ENCODE measurements at regions of chr10 and their contacts with region 1.

Region 1: GRCh38 chr10:101959349-101959916 is 96.5 kb downstream of the ARMH3 start:
- DNase-seq: no peak
- H3K4me3 ChIP-seq: no peak overlapping the region
- H3K27ac ChIP-seq: no peak overlapping the region
- H3K4me1 ChIP-seq: no peaks in the 10 kb centered on the region
- H3K27me3 ChIP-seq: no peaks in the 10 kb centered on the region
- CTCF ChIP-seq: no peak

Region 2: DNA sequence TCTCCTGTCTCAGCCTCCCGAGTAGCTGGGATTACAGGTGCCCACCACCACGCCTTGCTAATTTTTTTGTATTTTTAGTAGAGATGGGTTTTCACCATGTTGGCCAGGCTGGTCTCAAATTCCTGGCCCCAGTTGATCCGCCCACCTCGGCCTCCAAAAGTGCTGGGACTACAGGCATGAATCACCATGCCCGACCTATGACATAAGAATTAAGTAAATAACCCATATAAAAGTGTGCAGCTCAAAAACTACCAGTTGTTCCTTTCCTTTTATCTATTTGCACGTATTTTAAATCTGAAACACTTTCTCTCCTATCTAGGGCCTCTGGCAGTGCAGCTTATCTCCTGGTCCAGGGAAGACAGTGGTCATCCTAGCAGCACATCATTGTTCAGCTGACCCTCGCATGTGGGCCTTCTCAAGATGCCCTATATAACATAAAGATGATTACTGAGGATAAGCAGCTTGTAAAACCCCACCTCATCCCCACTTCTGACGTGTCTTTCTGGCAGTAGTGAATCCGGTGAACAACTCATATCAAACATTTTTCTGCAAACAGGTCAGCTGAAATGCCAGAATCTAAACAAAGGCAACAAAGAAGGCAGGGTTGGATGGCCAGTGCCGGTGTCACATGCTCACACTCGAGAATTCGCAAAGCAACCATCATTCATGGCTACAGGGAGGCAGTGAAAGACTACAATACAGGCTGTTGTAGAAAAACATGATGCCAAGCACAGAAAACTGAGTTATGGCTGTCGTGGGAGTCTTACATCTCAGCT is 79.8 kb before region 1 on chr10:
- intact Hi-C with region 1: no loop called
- DNase-seq: no peak
- H3K4me3 ChIP-seq: no peak overlapping the region
- H3K27ac ChIP-seq: no peak overlapping the region
- H3K4me1 ChIP-seq: no peaks in the 10 kb centered on the region
- H3K27me3 ChIP-seq: no peaks in the 10 kb centered on the region
- CTCF ChIP-seq: no peak

Region 3: GRCh38 chr10:101941871-101942270 is 17.6 kb before region 1 on chr10:
- intact Hi-C with region 1: loop called (anchors 2 kb)
- DNase-seq: no peak
- H3K4me3 ChIP-seq: no peak overlapping the region
- H3K27ac ChIP-seq: no peak overlapping the region
- H3K4me1 ChIP-seq: peaks cover 9 to 39% of the 10 kb centered on the region in 2 donors
- H3K27me3 ChIP-seq: no peaks in the 10 kb centered on the region
- CTCF ChIP-seq: no peak

Region 4: DNA sequence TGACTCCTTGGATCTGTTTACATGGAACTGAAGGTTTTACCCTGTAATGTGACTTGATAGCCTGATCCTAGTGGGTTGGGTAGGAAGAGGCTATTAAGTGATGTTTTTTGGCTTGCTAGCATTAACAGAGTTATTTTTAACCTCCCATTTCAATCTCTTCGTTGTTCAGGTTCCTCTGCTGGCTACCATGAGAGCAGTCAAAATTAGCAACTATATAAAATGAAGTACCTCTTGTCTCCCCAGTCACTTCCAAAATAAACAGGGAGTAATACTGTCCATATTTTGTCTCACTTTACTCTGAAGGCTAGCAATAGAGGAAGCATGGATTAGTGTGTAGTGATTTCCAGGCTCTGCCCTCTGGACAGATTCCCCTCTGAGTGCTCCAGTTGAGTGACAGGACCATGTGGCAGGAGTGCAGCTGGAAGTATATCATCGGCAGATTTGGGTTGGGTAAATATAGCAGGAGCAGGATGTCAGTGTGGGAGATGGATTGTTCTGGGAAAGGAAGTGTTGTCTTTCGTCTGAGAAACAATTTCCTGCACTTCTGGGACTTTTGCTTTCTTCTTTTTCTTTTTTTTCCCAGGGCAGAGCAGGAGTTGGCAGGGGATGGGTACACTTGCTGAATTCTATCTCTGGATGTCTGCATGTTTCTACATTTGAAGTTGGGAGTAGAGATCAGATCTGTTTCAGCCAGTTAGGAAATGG is 321.1 kb after region 1 on chr10:
- intact Hi-C with region 1: no loop called
- DNase-seq: no peak
- H3K4me3 ChIP-seq: peak overlapping the region; percentile 11 to 19
- H3K27ac ChIP-seq: peak overlapping the region; percentile 15 to 40
- H3K4me1 ChIP-seq: peaks cover 0 to 16% of the 10 kb centered on the region in 2 donors
- H3K27me3 ChIP-seq: no peaks in the 10 kb centered on the region
- CTCF ChIP-seq: no peak